ENCODE measurements at regions of chr2 and their contacts with region 1.

Region 1: GRCh38 chr2:60550178-60550983 is 3.1 kb downstream of the BCL11A start:
- DNase-seq: peak; percentile 71
- H3K4me3 ChIP-seq: peak overlapping the region; percentile 79
- H3K27ac ChIP-seq: peak overlapping the region; percentile 31
- H3K27me3 ChIP-seq: peaks cover 7% of the 10 kb centered on the region
- CTCF ChIP-seq: peak; percentile 77

Region 2: DNA sequence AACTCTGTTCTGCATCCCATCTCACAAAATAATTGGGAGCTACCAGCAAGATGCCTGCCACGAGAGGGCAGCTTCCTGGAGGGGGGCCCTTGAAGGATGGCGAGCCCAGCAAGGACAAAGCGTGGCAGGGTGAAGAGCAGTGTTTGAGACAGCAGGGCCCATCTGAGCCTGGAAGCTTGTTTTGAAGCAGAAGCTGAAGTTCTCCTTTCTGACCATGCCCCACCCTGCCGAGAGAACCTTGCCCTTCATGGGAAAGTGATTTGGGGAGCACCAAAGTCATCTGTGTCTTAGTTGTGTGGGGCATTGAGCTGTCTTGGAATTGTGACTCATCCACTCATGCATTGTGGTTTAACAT is 213.3 kb before region 1 on chr2:
- CTCF ChIA-PET with region 1: interaction called, 10 read pairs
- POLR2A ChIA-PET with region 1: no interaction called
- DNase-seq: no peak
- H3K4me3 ChIP-seq: no peak overlapping the region
- H3K27ac ChIP-seq: no peak overlapping the region
- H3K27me3 ChIP-seq: no peaks in the 10 kb centered on the region
- CTCF ChIP-seq: peak; percentile 32

Region 3: GRCh38 chr2:60507211-60507965 is 43.0 kb before region 1 on chr2:
- CTCF ChIA-PET with region 1: interaction called, 6 read pairs
- POLR2A ChIA-PET with region 1: interaction called, 10 read pairs
- DNase-seq: no peak
- H3K4me3 ChIP-seq: no peak overlapping the region
- H3K27ac ChIP-seq: no peak overlapping the region
- H3K27me3 ChIP-seq: no peaks in the 10 kb centered on the region
- CTCF ChIP-seq: no peak

Region 4: DNA sequence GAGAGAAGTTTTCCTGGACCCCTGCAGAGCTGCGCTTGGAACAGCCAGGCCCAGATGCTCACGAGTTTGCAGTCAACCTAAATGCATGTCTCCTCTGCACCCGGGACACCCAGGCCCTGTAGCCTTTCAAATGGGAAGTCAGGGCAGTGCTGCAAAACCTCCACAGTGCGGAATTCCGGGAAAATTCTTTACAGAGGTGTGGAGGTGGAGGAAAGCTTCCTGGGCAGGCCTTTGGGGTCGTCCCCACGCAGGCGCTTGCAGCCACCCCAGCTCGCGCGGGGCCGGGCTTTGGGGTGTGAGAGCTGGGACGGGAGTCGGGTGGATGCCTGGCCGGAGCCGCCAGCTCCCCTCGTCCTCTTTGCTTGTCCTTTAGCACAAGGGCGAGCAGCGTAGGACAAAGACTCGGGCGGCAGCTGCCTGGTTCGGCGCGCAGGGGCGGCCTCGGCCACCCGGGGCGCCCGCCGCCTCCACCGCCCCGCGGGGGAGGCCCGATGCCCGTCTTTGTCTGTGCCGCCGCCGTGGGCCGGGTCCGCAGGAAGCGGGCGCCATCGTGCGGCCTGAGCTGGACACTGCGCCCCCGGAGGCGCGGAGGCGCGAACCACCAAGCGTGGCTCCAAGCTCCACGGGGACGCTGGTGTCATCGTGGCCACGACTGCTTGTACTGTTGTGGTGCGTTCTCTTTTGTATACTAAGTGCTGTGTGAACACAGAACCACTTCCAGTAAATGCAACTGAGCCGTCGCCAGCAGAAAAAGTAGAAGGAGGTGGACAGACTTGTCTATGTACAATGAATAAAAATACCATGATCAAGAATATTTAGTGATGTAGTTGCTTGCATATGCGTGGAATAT is 31.3 kb after region 1 on chr2:
- CTCF ChIA-PET with region 1: interaction called, 81 read pairs
- POLR2A ChIA-PET with region 1: no interaction called
- DNase-seq: peak; percentile 4
- H3K4me3 ChIP-seq: peak overlapping the region; percentile 54
- H3K27ac ChIP-seq: no peak overlapping the region
- H3K27me3 ChIP-seq: peaks cover 18% of the 10 kb centered on the region
- CTCF ChIP-seq: peak; percentile 86

Measured in AG04450 (cell line).